A549 (cell line): ENCODE measurements at regions of chr17 and their contacts with region 1.

Region 1: DNA sequence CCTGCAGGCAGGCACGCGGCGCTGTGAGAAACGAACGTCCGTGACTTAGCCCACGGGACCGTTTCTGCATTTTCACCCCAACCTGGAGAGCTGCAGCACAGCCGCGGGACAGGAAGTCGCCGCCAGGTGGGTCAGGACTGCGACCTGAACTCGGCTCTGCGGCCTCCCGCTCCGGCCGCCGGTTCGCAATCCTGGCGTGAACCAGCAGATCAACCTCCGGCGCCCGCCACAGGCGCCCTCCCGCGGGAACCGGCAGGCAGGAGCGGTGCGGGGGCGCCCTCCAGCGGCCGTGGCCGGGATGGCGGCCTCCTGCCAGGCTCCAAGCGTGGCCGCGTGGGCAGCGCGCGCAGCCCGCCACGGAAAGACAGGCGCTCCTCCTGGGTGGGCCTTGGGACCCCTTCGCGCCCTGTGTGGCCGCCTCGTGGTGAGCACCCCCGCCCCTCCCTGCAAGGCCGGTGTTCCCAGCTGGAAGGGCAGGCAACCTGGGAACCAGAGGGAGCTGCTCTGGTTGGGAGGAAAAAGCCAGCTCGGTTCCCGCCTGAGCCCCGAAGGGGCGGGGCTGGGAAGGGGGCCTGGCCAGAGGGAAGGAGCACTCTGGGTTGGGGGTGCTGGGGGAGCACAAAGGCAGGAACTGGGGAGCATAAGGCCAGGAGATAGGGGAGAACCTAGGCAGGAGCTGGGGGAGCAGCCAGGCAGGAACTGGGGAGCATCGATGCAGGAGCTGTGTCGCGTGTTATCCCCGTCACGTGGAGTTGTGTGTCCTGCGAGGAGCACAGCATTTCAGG is 28.2 kb downstream of the ACTG1 start:
- DNase-seq: peak; percentile 80 to 88
- ATAC-seq: peak; percentile 51 to 69
- H3K4me3 ChIP-seq: peak overlapping the region; percentile 37
- H3K27ac ChIP-seq: peak overlapping the region; percentile 86 to 89
- H3K4me1 ChIP-seq: peaks cover 39% of the 10 kb centered on the region
- CTCF ChIP-seq: peak; percentile 100
- EP300 ChIP-seq: no peak
- POLR2A ChIP-seq: 0 out of 2 replicates have a peak, but pooled peaks have one; percentile 21
- RAD21 ChIP-seq: peak; percentile 93 to 100

Region 2: GRCh38 chr17:81309070-81309905 is 175.1 kb before region 1 on chr17:
- CTCF ChIA-PET with region 1: interaction called, 60 read pairs
- POLR2A ChIA-PET with region 1: interaction called, 4 read pairs
- DNase-seq: peak; percentile 90 to 99
- ATAC-seq: peak; percentile 74 to 88
- H3K4me3 ChIP-seq: peak overlapping the region; percentile 48
- H3K27ac ChIP-seq: peak overlapping the region; percentile 82 to 91
- H3K4me1 ChIP-seq: peaks cover 35% of the 10 kb centered on the region
- CTCF ChIP-seq: peak; percentile 50
- EP300 ChIP-seq: no peak
- POLR2A ChIP-seq: peak; percentile 50
- RAD21 ChIP-seq: peak; percentile 52 to 69

Region 3: GRCh38 chr17:81346090-81346907 is 138.1 kb before region 1 on chr17:
- CTCF ChIA-PET with region 1: interaction called, 12 read pairs
- POLR2A ChIA-PET with region 1: no interaction called
- DNase-seq: peak; percentile 97 to 99
- ATAC-seq: peak; percentile 68 to 85
- H3K4me3 ChIP-seq: peak overlapping the region; percentile 72
- H3K27ac ChIP-seq: peak overlapping the region; percentile 92 to 94
- H3K4me1 ChIP-seq: peaks cover 27% of the 10 kb centered on the region
- CTCF ChIP-seq: no peak
- EP300 ChIP-seq: no peak
- POLR2A ChIP-seq: peak; percentile 78
- RAD21 ChIP-seq: peak in 1 of 2 experiments; percentile 11; a peak in 1 of 5 replicates

Region 4: GRCh38 chr17:81379523-81379942 is 104.9 kb before region 1 on chr17:
- CTCF ChIA-PET with region 1: interaction called, 60 read pairs
- POLR2A ChIA-PET with region 1: no interaction called
- DNase-seq: no peak
- ATAC-seq: peak; percentile 52 to 66
- H3K4me3 ChIP-seq: no peak overlapping the region
- H3K27ac ChIP-seq: no peak overlapping the region
- H3K4me1 ChIP-seq: no peaks in the 10 kb centered on the region
- CTCF ChIP-seq: no peak
- EP300 ChIP-seq: no peak
- POLR2A ChIP-seq: no peak
- RAD21 ChIP-seq: no peak

Region 5: GRCh38 chr17:81412490-81413093 is 71.8 kb before region 1 on chr17:
- CTCF ChIA-PET with region 1: interaction called, 18 read pairs
- POLR2A ChIA-PET with region 1: no interaction called
- DNase-seq: no peak
- ATAC-seq: no peak
- H3K4me3 ChIP-seq: no peak overlapping the region
- H3K27ac ChIP-seq: peak overlapping the region in 1 of 2 experiments; percentile 45; a peak in 3 of 6 replicates
- H3K4me1 ChIP-seq: peaks cover 24% of the 10 kb centered on the region
- CTCF ChIP-seq: no peak
- EP300 ChIP-seq: no peak
- POLR2A ChIP-seq: no peak
- RAD21 ChIP-seq: no peak

Region 6: DNA sequence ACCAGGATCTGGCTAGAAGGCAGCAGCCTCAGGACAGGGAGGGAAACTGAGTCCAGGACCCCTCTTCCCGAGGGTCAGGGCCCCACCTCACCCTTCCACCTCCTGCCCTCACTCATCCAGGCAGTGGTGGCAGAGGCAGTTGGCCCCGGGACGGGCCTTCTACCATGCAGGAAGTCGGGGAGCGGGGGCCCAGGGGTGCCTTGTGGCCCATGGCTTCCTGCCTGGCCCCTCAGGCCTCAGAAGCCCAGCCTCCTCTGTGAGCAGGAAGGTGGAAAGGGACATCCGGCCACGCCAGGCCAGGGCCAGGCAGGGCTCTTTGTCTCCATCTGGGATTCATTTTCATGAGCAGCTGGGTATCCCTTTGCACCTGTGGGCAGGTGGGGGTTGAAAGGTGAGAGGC is 30.7 kb before region 1 on chr17:
- CTCF ChIA-PET with region 1: interaction called, 36 read pairs
- POLR2A ChIA-PET with region 1: no interaction called
- DNase-seq: no peak
- ATAC-seq: no peak
- H3K4me3 ChIP-seq: no peak overlapping the region
- H3K27ac ChIP-seq: no peak overlapping the region
- H3K4me1 ChIP-seq: no peaks in the 10 kb centered on the region
- CTCF ChIP-seq: no peak
- EP300 ChIP-seq: no peak
- POLR2A ChIP-seq: no peak
- RAD21 ChIP-seq: no peak

Region 7: GRCh38 chr17:81500047-81500446 is 15.7 kb after region 1 on chr17:
- CTCF ChIA-PET with region 1: interaction called, 43 read pairs
- POLR2A ChIA-PET with region 1: interaction called, 6 read pairs
- DNase-seq: peak in 1 of 2 experiments; percentile 57
- ATAC-seq: peak; percentile 11 to 47; a peak in 5 of 6 replicates
- H3K4me3 ChIP-seq: no peak overlapping the region
- H3K27ac ChIP-seq: peak overlapping the region; percentile 43 to 71; a peak in 5 of 6 replicates
- H3K4me1 ChIP-seq: peaks cover 14% of the 10 kb centered on the region
- CTCF ChIP-seq: no peak
- EP300 ChIP-seq: no peak
- POLR2A ChIP-seq: no peak
- RAD21 ChIP-seq: no peak